Naive thymus-derived CD4-positive, alpha-beta T cell (primary cell): ENCODE measurements at regions of chr17 and their contacts with region 1.

Region 1: GRCh38 chr17:44533533-44534246 is 23.6 kb upstream of the FZD2 start:
- DNase-seq: peak; percentile 55 to 86 (median 77)
- ATAC-seq: peak; percentile 98
- H3K4me3 ChIP-seq: no peak overlapping the region
- H3K4me3 Mint-ChIP-seq: no peak overlapping the region
- H3K27ac ChIP-seq: no peak overlapping the region
- H3K27ac Mint-ChIP-seq: peak overlapping the region in 4 of 9 donors; percentile 2 to 84 (median 6)
- H3K4me1 ChIP-seq: no peaks in the 10 kb centered on the region
- H3K4me1 Mint-ChIP-seq: peaks cover 0 to 10% (median 7%) of the 10 kb centered on the region in 7 donors
- H3K27me3 ChIP-seq: no peaks in the 10 kb centered on the region
- H3K27me3 Mint-ChIP-seq: peaks cover 0 to 14% (median 6%) of the 10 kb centered on the region in 5 donors

Region 2: DNA sequence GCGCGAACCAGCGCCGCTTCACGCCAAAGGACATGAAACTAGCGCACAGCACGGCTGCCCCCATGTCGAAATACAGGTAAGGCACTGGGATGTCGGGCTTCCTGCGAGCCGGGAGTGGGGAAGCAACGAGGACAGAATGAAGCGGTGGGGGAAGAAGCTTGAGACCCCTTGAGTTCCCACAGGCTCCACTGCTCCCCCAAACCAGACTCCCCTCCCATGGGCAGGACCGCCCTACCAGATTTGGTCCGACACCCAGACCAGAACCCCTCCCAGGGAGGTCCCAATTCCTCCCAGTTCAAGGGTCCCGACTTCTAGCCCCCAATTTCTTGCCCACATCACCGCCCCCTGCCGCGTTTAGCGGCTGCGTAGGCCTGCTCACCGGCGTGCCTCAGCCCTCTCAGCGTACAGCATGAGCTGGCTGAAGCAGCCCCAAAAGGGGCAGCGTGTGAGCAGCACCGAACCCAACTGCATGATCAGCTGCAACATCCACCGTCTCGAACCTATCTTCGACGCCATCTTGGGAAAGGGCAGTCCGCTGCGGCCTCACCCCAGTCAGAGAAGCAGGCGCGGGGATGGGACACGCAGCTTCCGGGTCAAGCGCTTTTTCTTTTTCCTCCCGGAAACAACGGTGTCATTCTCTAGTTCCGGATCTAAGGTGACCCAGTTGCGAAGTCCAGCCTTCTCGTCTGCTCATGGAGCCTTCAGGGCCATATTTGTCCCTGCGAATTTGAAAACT is 519.1 kb before region 1 on chr17 and contains the start of gene TMEM101:
- CTCF ChIA-PET with region 1: no interaction called
- POLR2A ChIA-PET with region 1: no interaction called
- intact Hi-C with region 1: no loop called
- DNase-seq: peak; percentile 63 to 90 (median 82)
- ATAC-seq: peak; percentile 99
- H3K4me3 ChIP-seq: peak within 1 kb of the TSS; percentile 96
- H3K4me3 Mint-ChIP-seq: peak within 1 kb of the TSS; percentile 93 to 100 (median 98)
- H3K27ac ChIP-seq: peak within 1 kb of the TSS; percentile 73
- H3K27ac Mint-ChIP-seq: peak within 1 kb of the TSS; percentile 84 to 99 (median 95)
- H3K4me1 ChIP-seq: peaks cover 8 to 9% of the 10 kb centered on the region in 2 donors
- H3K4me1 Mint-ChIP-seq: peaks cover 7 to 23% (median 11%) of the 10 kb centered on the region in 7 donors
- H3K27me3 ChIP-seq: no peaks in the 10 kb centered on the region
- H3K27me3 Mint-ChIP-seq: peaks cover 0 to under 1% (median 0%) of the 10 kb centered on the region in 5 donors
- total RNA-seq, gene TMEM101: 12.1 to 32.0 (median 30.5) TPM

Region 3: DNA sequence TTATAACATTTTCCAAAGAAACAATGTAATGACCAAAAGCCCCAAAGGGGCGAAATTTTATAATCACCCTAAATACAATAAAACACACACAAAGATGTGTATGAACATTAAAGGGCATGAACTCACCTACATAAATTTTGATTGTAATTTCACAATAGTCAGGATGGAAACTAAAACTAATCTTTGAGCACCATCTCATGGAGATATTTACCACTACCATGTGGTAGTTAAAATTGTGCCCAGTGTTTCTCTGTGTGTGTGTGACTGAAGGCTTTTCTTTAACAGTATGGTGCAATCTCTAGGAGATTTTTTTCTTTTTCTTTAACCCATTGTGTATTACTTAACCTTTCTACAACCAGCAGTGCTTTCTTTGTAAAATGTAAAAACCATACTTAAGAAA is 102.9 kb after region 1 on chr17:
- CTCF ChIA-PET with region 1: interaction called, 3 read pairs
- POLR2A ChIA-PET with region 1: no interaction called
- intact Hi-C with region 1: loop called in 1 of 2 experiments (anchors 5 kb)
- DNase-seq: peak in 2 of 9 donors; percentile 2 to 9
- ATAC-seq: no peak
- H3K4me3 ChIP-seq: no peak overlapping the region
- H3K4me3 Mint-ChIP-seq: no peak overlapping the region
- H3K27ac ChIP-seq: no peak overlapping the region
- H3K27ac Mint-ChIP-seq: no peak overlapping the region
- H3K4me1 ChIP-seq: no peaks in the 10 kb centered on the region
- H3K4me1 Mint-ChIP-seq: no peaks in the 10 kb centered on the region
- H3K27me3 ChIP-seq: no peaks in the 10 kb centered on the region
- H3K27me3 Mint-ChIP-seq: peaks cover 5 to 21% (median 13%) of the 10 kb centered on the region in 5 donors

Region 4: DNA sequence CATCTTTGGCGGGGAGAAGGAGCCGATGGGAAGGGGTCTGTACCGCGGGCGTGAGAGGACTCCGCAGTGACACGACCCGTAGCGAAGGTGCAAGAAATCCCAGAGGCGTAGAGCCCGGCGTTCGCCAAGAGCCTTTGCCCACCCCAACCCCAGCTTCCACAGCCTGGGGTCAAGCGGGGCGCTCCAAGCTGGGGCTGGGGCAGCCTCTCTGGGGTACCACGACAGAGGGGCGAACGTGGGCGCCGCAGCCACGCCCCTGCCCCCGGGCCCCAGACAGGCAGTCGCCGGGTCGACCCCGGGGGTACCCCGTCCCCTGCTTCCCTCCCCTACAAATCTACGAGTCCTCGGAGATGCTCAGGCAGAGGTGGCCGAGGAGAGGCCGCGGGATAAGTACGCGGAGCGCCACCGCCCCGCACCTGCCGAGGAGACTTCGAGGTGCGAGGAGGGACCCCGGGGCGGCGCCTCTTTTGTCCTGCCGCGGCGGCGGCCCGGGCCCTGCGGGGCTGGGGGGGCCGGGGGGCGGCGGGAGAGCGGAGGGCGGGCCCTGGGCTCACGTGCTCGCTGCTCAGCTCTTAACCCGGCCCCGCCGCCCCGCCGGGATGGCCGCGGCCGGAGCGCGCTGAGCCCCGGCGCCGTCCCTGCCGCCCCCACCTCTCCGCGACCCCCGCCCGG is 224.9 kb after region 1 on chr17 and contains the start of gene ADAM11:
- CTCF ChIA-PET with region 1: no interaction called
- POLR2A ChIA-PET with region 1: no interaction called
- intact Hi-C with region 1: no loop called
- DNase-seq: peak in 1 of 9 donors; percentile 21
- ATAC-seq: peak; percentile 57
- H3K4me3 ChIP-seq: no peak within 1 kb of the TSS
- H3K4me3 Mint-ChIP-seq: peak within 1 kb of the TSS; percentile 14 to 80 (median 64)
- H3K27ac ChIP-seq: no peak within 1 kb of the TSS
- H3K27ac Mint-ChIP-seq: no peak within 1 kb of the TSS
- H3K4me1 ChIP-seq: peaks cover 0 to 4% of the 10 kb centered on the region in 2 donors
- H3K4me1 Mint-ChIP-seq: peaks cover 0 to 4% (median 2%) of the 10 kb centered on the region in 7 donors
- H3K27me3 ChIP-seq: peaks cover 0 to 15% of the 10 kb centered on the region in 2 donors
- H3K27me3 Mint-ChIP-seq: peaks cover 26 to 40% (median 27%) of the 10 kb centered on the region in 5 donors
- total RNA-seq, gene ADAM11: 0.22 to 1.5 (median 0.66) TPM

Region 5: GRCh38 chr17:44864866-44865660 is 331.4 kb after region 1 on chr17:
- CTCF ChIA-PET with region 1: interaction called, 3 read pairs
- POLR2A ChIA-PET with region 1: no interaction called
- intact Hi-C with region 1: loop called in 1 of 2 experiments (anchors 1 kb)
- DNase-seq: peak; percentile 37 to 76 (median 65)
- ATAC-seq: peak; percentile 86
- H3K4me3 ChIP-seq: no peak overlapping the region
- H3K4me3 Mint-ChIP-seq: no peak overlapping the region
- H3K27ac ChIP-seq: no peak overlapping the region
- H3K27ac Mint-ChIP-seq: no peak overlapping the region
- H3K4me1 ChIP-seq: no peaks in the 10 kb centered on the region
- H3K4me1 Mint-ChIP-seq: no peaks in the 10 kb centered on the region
- H3K27me3 ChIP-seq: no peaks in the 10 kb centered on the region
- H3K27me3 Mint-ChIP-seq: no peaks in the 10 kb centered on the region

Region 6: GRCh38 chr17:44926821-44927525 is 393.3 kb after region 1 on chr17:
- CTCF ChIA-PET with region 1: no interaction called
- POLR2A ChIA-PET with region 1: no interaction called
- intact Hi-C with region 1: no loop called
- DNase-seq: no peak
- ATAC-seq: no peak
- H3K4me3 ChIP-seq: no peak overlapping the region
- H3K4me3 Mint-ChIP-seq: no peak overlapping the region
- H3K27ac ChIP-seq: no peak overlapping the region
- H3K27ac Mint-ChIP-seq: no peak overlapping the region
- H3K4me1 ChIP-seq: no peaks in the 10 kb centered on the region
- H3K4me1 Mint-ChIP-seq: no peaks in the 10 kb centered on the region
- H3K27me3 ChIP-seq: no peaks in the 10 kb centered on the region
- H3K27me3 Mint-ChIP-seq: peaks cover 0 to 8% (median 6%) of the 10 kb centered on the region in 5 donors